ENCODE measurements at regions of chr18 and their contacts with region 1.

Region 1: GRCh38 chr18:74353169-74353775 is 37.6 kb downstream of the C18orf63 start:
- DNase-seq: peak in 1 of 5 donors; percentile 23
- H3K4me3 ChIP-seq: no peak overlapping the region
- H3K27ac ChIP-seq: no peak overlapping the region
- H3K4me1 ChIP-seq: no peaks in the 10 kb centered on the region
- H3K27me3 ChIP-seq: no peaks in the 10 kb centered on the region
- CTCF ChIP-seq: no peak
- EP300 ChIP-seq: no peak
- POLR2A ChIP-seq: no peak

Region 2: GRCh38 chr18:74546751-74547550 is 193.7 kb after region 1 on chr18:
- intact Hi-C with region 1: loop called (anchors 10 kb)
- DNase-seq: no peak
- H3K4me3 ChIP-seq: no peak overlapping the region
- H3K27ac ChIP-seq: no peak overlapping the region
- H3K4me1 ChIP-seq: peaks cover 2% of the 10 kb centered on the region
- H3K27me3 ChIP-seq: no peaks in the 10 kb centered on the region
- CTCF ChIP-seq: no peak
- EP300 ChIP-seq: no peak
- POLR2A ChIP-seq: no peak

Region 3: DNA sequence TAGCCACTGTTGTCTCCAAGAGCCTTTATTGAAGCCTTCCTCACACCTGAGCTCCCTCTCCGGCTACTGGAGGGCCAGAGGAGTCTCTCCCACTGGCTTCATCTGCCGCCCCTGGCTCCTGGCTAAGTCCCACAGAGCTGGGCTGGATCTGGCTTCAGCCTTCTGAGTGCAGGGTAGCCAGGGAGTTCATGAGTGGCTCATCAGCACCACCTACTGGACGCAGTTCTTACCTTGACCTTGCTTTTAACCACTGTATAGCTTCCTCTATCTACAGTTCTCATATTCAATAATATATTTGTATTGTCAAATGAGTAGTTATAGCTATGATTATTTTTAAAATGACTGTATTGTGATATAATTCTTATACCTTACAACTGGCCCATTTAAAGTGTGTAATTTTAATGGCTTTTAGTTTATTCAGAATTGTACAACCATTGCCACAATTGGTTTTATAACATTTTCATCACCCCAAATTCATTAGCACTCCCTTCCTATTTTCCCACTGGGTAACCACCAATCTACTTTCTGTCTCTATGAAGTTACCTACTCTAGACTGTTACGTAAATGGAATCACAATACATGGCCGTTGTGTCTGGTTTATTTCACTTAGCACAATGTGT is 198.8 kb after region 1 on chr18:
- intact Hi-C with region 1: loop called (anchors 10 kb)
- DNase-seq: peak; percentile 51 to 76 (median 69)
- H3K4me3 ChIP-seq: no peak overlapping the region
- H3K27ac ChIP-seq: no peak overlapping the region
- H3K4me1 ChIP-seq: peaks cover 2% of the 10 kb centered on the region
- H3K27me3 ChIP-seq: no peaks in the 10 kb centered on the region
- CTCF ChIP-seq: peak in 2 of 3 donors; percentile 30 to 46
- EP300 ChIP-seq: no peak
- POLR2A ChIP-seq: no peak